Activated naive CD8-positive, alpha-beta T cell treated with anti-CD3 and anti-CD28 coated beads, Interleukin-2, amount 10 ng/mL, durations not matched to agents 7 days and 5 days (primary cell): ENCODE measurements at regions of chr17 and their contacts with region 1.

Region 1: GRCh38 chr17:40219073-40219860 is at the start of gene WIPF2:
- DNase-seq: peak; percentile 98
- ATAC-seq: peak; percentile 95
- H3K4me3 Mint-ChIP-seq: peak within 1 kb of the TSS; percentile 97
- H3K27ac Mint-ChIP-seq: peak within 1 kb of the TSS; percentile 100
- H3K4me1 Mint-ChIP-seq: peaks cover 24% of the 10 kb centered on the region
- H3K27me3 Mint-ChIP-seq: no peaks in the 10 kb centered on the region
- total RNA-seq, gene WIPF2: 27.7 to 28.5 TPM

Region 2: GRCh38 chr17:39929646-39930407 is 289.4 kb before region 1 on chr17:
- POLR2A ChIA-PET with region 1: no interaction called
- DNase-seq: no peak
- ATAC-seq: no peak
- H3K4me3 Mint-ChIP-seq: no peak overlapping the region
- H3K27ac Mint-ChIP-seq: no peak overlapping the region
- H3K4me1 Mint-ChIP-seq: peaks cover 18% of the 10 kb centered on the region
- H3K27me3 Mint-ChIP-seq: peaks cover 2% of the 10 kb centered on the region

Region 3: DNA sequence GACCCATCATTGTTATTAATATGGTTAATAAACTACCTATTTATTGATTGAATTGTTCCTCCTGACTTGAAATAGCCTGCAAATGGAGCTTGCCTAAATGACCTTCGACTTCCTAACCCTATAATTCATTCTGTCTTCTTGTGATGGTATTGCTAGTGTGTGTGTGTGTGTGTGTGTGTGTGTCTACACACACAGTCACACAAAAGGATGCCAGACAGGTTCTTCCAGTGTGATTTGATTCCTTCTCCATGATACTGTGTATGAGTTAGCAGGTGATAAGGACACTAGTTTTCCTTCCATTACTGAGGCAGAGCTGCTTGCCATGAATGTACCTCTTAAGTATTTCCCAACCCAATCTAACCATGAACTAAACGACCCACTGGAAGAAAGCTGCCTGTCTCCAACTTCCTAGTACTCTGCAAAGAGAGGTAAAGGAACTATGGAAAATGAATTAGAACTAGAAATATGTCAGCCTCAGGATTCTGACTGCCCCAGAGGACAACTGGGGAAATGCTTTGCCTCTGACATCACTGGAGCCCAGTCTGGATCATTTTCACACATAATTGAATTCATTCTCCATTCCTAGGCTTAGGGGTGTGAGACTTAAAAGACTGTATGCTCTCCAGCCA is 64.9 kb after region 1 on chr17:
- POLR2A ChIA-PET with region 1: interaction called, 18 read pairs
- DNase-seq: no peak
- ATAC-seq: no peak
- H3K4me3 Mint-ChIP-seq: peak overlapping the region; percentile 57
- H3K27ac Mint-ChIP-seq: peak overlapping the region; percentile 74
- H3K4me1 Mint-ChIP-seq: peaks cover 32% of the 10 kb centered on the region
- H3K27me3 Mint-ChIP-seq: no peaks in the 10 kb centered on the region